ENCODE measurements at regions of chr1 and their contacts with region 1.

Region 1: GRCh38 chr1:37323486-37324377 is 150.6 kb upstream of the ZC3H12A start:
- DNase-seq: no peak
- ATAC-seq: no peak
- H3K4me3 ChIP-seq: no peak overlapping the region
- H3K27ac ChIP-seq: no peak overlapping the region
- H3K4me1 ChIP-seq: no peaks in the 10 kb centered on the region
- H3K27me3 ChIP-seq: no peaks in the 10 kb centered on the region; a peak in 1 of 4 replicates
- CTCF ChIP-seq: peak; percentile 68 to 87 (median 74)
- EP300 ChIP-seq: no peak
- POLR2A ChIP-seq: no peak
- RAD21 ChIP-seq: peak; percentile 89

Region 2: DNA sequence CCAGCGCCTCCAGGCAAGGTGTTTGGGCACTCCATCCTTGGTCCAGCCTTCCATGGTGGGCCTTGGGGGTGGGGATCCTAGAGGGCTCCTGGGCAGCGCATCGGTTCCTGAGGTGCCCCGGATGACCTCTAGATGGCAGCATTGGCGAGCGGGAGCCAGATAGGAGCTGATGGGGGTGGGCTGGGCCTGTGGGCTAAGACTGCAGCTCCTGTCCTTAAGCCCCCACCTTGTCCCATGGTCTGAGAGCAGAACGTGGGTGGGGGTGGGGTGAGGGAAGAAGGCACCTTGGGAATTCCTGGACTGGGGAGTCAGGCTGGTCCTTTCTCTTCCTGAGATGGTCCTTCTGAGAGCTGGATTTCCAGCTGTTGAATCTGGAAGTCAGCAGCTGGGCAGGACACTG is 747.6 kb before region 1 on chr1:
- CTCF ChIA-PET with region 1: interaction called, 4 read pairs
- POLR2A ChIA-PET with region 1: no interaction called
- RAD21 ChIA-PET with region 1: no interaction called
- SMC1A ChIA-PET with region 1: no interaction called
- in situ Hi-C with region 1: no loop called
- intact Hi-C with region 1: loop called (anchors 10 kb)
- DNase-seq: no peak
- ATAC-seq: peak; percentile 97
- H3K4me3 ChIP-seq: no peak overlapping the region
- H3K27ac ChIP-seq: no peak overlapping the region
- H3K4me1 ChIP-seq: no peaks in the 10 kb centered on the region
- H3K27me3 ChIP-seq: peaks cover 0 to 4% of the 10 kb centered on the region in 2 experiments; a peak in 3 of 4 replicates
- CTCF ChIP-seq: peak; percentile 86 to 95 (median 86)
- EP300 ChIP-seq: no peak
- POLR2A ChIP-seq: no peak
- RAD21 ChIP-seq: peak; percentile 74

Region 3: DNA sequence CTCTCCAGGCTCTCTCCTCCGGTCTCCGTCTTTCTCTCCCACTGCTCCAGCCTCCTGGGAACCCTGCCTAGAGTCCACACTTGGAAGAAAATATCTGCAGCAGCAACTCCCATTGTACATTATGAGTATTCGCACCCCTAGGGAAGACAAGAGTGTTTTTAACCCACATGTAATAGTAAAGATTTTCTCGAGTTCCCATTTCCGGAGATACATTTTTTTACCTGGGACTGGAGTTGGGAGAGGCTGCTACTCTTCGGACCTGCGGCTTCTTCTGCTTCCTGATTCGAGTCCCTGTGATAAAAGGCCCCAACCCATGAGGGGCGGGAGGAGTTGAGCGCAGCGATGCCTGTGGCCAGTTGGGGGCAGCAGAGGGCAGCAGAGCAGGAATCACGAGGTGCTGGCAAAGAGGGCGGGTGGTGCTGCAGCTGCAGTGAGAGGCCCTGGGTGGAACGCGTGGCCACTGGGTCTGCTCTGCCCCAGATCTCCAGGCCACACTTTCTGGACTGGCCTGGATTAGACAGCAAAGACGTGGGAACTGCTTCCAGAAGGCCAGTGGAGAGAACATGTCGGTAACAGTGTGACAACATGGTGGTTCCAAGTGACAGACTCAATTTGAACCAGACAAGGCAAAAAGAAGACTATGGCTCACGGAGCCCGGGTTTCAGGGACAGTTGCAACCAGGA is 620.1 kb before region 1 on chr1:
- CTCF ChIA-PET with region 1: interaction called, 3 read pairs
- POLR2A ChIA-PET with region 1: no interaction called
- RAD21 ChIA-PET with region 1: no interaction called
- SMC1A ChIA-PET with region 1: no interaction called
- in situ Hi-C with region 1: loop called (anchors 5 kb)
- intact Hi-C with region 1: loop called (anchors 5 kb)
- DNase-seq: peak; percentile 5
- ATAC-seq: peak; percentile 100
- H3K4me3 ChIP-seq: no peak overlapping the region
- H3K27ac ChIP-seq: no peak overlapping the region
- H3K4me1 ChIP-seq: no peaks in the 10 kb centered on the region
- H3K27me3 ChIP-seq: peaks cover 0 to under 1% of the 10 kb centered on the region in 2 experiments; a peak in 2 of 4 replicates
- CTCF ChIP-seq: peak; percentile 87 to 93 (median 91)
- EP300 ChIP-seq: no peak
- POLR2A ChIP-seq: no peak
- RAD21 ChIP-seq: peak; percentile 85

Region 4: DNA sequence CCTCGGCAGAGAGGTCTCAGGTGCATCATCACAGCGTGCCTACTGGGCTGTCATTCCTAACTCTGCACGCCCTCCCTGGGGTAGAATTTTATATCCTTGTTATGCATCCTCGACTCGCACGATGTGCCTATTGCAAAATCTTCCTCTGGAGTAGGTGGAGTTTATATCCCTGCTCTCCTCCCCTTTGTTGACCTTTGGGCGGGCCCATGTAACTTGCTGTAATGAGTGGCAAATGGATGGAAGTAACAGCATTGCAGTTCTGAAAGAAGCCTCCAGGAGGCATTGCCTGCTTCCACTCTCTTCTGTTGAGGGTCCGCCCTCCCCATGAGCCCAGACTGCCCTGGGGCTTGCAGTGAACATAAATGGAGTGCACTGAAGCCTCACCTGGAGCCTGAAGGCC is 227.3 kb before region 1 on chr1:
- CTCF ChIA-PET with region 1: no interaction called
- POLR2A ChIA-PET with region 1: no interaction called
- RAD21 ChIA-PET with region 1: interaction called, 3 read pairs
- SMC1A ChIA-PET with region 1: no interaction called
- in situ Hi-C with region 1: no loop called
- intact Hi-C with region 1: loop called (anchors 1 kb)
- DNase-seq: no peak
- ATAC-seq: peak; percentile 57
- H3K4me3 ChIP-seq: no peak overlapping the region
- H3K27ac ChIP-seq: no peak overlapping the region
- H3K4me1 ChIP-seq: peaks cover 5% of the 10 kb centered on the region; the same call in 1 of the 2 replicates
- H3K27me3 ChIP-seq: no peaks in the 10 kb centered on the region
- CTCF ChIP-seq: peak; percentile 26 to 48 (median 40)
- EP300 ChIP-seq: no peak
- POLR2A ChIP-seq: no peak
- RAD21 ChIP-seq: peak; percentile 42; the same call in 1 of the 2 replicates

Region 5: DNA sequence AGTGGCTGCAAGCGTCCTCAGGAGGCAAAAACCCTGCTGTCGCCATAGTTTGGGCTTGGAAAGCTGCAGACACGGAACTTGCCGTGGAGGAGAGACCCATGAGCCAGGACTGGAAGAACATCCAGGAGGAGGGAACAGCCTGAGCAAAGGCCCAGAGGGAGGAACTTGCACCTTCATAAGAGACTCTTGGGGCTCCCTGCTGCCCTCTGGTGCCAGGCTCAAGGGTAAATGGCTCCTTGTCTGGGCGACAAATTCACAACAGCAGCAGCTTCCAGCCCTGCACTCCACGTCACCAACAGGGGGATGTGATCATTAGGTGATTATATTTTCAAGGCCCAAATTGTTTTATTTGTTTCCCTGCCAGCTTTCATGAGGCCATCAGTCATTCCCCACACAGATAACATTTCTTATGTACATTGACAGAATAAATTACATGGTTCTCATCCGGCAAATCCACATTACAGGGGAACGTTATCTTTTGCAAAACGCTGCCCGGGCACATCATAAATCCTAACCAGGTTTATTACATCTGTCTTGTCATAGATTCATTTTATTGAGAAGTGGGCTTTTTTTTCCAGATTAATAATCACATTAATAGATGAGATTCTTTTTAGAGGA is 146.4 kb before region 1 on chr1:
- CTCF ChIA-PET with region 1: interaction called, 3 read pairs
- POLR2A ChIA-PET with region 1: no interaction called
- RAD21 ChIA-PET with region 1: no interaction called
- SMC1A ChIA-PET with region 1: no interaction called
- in situ Hi-C with region 1: no loop called
- intact Hi-C with region 1: loop called (anchors 10 kb)
- DNase-seq: no peak
- ATAC-seq: peak; percentile 72
- H3K4me3 ChIP-seq: no peak overlapping the region
- H3K27ac ChIP-seq: no peak overlapping the region
- H3K4me1 ChIP-seq: no peaks in the 10 kb centered on the region
- H3K27me3 ChIP-seq: no peaks in the 10 kb centered on the region; a peak in 2 of 4 replicates
- CTCF ChIP-seq: peak; percentile 45 to 48 (median 46); a peak in 5 of 6 replicates
- EP300 ChIP-seq: no peak
- POLR2A ChIP-seq: no peak
- RAD21 ChIP-seq: peak; percentile 42

Region 6: GRCh38 chr1:37306461-37306860 is 17.3 kb before region 1 on chr1:
- CTCF ChIA-PET with region 1: no interaction called
- POLR2A ChIA-PET with region 1: no interaction called
- RAD21 ChIA-PET with region 1: no interaction called
- SMC1A ChIA-PET with region 1: no interaction called
- in situ Hi-C with region 1: no loop called
- intact Hi-C with region 1: no loop called
- DNase-seq: no peak
- ATAC-seq: no peak
- H3K4me3 ChIP-seq: no peak overlapping the region
- H3K27ac ChIP-seq: no peak overlapping the region
- H3K4me1 ChIP-seq: no peaks in the 10 kb centered on the region
- H3K27me3 ChIP-seq: peaks cover 3 to 4% of the 10 kb centered on the region in 2 experiments; a peak in 2 of 4 replicates
- CTCF ChIP-seq: no peak
- EP300 ChIP-seq: no peak
- POLR2A ChIP-seq: no peak
- RAD21 ChIP-seq: no peak

Region 7: DNA sequence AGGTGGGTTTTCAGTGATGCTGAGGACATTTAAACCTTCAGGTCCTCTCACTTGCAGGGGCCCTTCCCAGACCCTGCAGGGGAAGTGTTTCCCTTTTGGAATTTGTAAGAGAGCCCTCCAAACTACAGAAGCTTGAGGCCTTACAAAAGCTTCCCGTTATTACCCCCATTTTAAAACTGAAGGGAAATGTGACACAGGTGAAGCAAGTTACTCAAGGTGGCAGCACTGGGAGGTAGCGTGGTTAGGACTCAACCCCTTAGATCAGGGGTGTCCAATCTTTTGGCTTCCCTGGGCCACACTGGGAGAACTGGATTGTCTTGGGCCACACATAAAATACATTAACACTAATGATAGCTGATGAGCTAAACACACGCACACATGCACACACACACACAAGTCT is 134.8 kb after region 1 on chr1:
- CTCF ChIA-PET with region 1: no interaction called
- POLR2A ChIA-PET with region 1: no interaction called
- RAD21 ChIA-PET with region 1: no interaction called
- SMC1A ChIA-PET with region 1: no interaction called
- in situ Hi-C with region 1: no loop called
- intact Hi-C with region 1: no loop called
- DNase-seq: no peak
- ATAC-seq: peak; percentile 33; the same call in 1 of the 3 replicates
- H3K4me3 ChIP-seq: no peak overlapping the region
- H3K27ac ChIP-seq: no peak overlapping the region
- H3K4me1 ChIP-seq: no peaks in the 10 kb centered on the region
- H3K27me3 ChIP-seq: no peaks in the 10 kb centered on the region
- CTCF ChIP-seq: peak in 2 of 3 experiments; percentile 14 to 39; a peak in 3 of 6 replicates
- EP300 ChIP-seq: no peak
- POLR2A ChIP-seq: no peak
- RAD21 ChIP-seq: 0 out of 2 replicates have a peak, but pooled peaks have one; percentile 25

Measured in GM12878 (cell line).